Mammary epithelial cell (primary cell): ENCODE measurements at regions of chr17 and their contacts with region 1.

Region 1: DNA sequence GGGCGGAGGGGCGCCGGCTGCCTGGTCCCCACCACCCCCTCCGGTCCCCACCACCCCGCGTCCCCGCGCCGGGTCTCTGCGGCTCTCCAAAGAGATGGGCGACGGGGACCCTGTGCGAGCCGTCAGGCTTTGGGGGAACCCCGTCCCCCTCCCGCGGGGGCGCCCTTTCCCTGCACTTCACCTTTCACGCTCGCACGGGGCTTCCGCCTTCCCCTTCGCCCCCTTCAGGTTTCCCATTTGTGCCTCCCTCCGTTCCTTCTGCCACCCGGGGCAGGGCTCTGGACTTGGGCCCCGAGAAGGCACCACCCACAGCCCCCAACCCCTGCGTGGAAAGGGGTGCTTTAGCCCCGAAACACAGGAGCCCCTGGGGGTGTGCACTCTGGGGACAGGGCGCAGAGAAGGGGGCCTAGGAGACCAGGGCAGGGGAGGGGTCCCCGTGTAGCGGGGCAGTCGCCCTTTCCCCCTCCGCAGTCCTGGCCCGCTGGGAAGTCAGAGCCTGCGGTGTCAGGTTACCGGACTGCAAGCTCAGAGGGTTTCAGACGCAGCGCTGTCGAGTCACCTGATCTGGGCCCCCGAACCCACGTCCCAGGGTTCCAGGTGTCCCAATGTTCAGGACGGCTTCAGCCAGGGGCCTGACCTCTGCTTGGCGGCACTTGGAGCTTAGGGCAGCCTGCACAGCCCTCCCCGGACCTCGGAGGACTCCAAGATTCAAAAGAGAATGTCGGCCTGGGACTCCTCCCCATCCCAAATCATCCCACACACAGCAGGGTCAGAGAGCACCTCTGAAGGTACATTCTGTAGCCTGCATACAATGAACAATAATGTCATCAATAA is 6.7 kb upstream of the CCDC92B start:
- DNase-seq: no peak
- H3K4me3 ChIP-seq: peak overlapping the region in 1 of 3 experiments; percentile 23
- H3K27ac ChIP-seq: no peak overlapping the region
- H3K4me1 ChIP-seq: no peaks in the 10 kb centered on the region
- H3K27me3 ChIP-seq: peaks cover 11% of the 10 kb centered on the region
- CTCF ChIP-seq: no peak

Region 2: GRCh38 chr17:2711601-2712299 is 44.4 kb before region 1 on chr17 and contains the start of gene CLUH:
- CTCF ChIA-PET with region 1: no interaction called
- dilution Hi-C with region 1: no loop called
- in situ Hi-C with region 1: no loop called
- intact Hi-C with region 1: loop called (anchors 5 kb)
- DNase-seq: peak; percentile 98
- H3K4me3 ChIP-seq: peak within 1 kb of the TSS; percentile 65 to 92 (median 75)
- H3K27ac ChIP-seq: peak within 1 kb of the TSS; percentile 74
- H3K4me1 ChIP-seq: peaks cover 31% of the 10 kb centered on the region
- H3K27me3 ChIP-seq: no peaks in the 10 kb centered on the region
- CTCF ChIP-seq: no peak
- total RNA-seq, gene CLUH: 64.2 to 97.0 TPM